Activated B cell treated with CpG ODN at 0.5 μM for 24 hours (primary cell): ENCODE measurements at regions of chr11 and their contacts with region 1.

Region 1: GRCh38 chr11:60913793-60914632 is at the start of gene TMEM109:
- DNase-seq: peak; percentile 80
- ATAC-seq: peak; percentile 54
- H3K4me3 Mint-ChIP-seq: peak within 1 kb of the TSS; percentile 98
- H3K27ac Mint-ChIP-seq: peak within 1 kb of the TSS; percentile 99
- H3K4me1 Mint-ChIP-seq: peaks cover 87% of the 10 kb centered on the region
- H3K27me3 Mint-ChIP-seq: no peaks in the 10 kb centered on the region
- CTCF ChIP-seq: no peak
- total RNA-seq, gene TMEM109: 117 and 121 TPM in 2 replicates

Region 2: DNA sequence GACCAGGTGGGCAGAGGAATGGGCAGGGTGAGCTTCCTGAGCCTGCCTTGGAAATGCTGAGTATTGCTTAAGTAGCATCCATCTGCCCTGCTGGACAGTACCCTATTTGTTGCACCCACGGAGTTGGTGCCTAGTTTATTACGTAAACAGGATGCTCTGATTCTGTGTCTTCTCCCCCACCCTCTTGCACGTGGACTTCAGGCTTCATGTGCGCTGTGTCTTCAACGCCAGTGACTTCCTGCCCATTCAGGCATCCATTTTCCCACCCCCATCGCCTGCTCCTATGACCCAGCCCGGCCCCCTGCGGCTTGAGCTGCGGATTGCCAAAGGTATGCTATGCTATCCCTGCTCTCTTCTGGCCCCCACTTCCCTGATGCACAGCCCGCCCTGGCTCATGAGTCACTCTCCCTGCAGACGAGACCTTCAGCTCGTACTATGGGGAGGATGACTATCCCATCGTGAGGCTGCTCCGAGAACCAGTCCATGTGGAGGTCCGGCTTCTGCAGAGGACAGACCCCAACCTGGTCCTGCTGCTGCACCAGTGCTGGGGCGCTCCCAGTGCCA is 41.0 kb before region 1 on chr11:
- CTCF ChIA-PET with region 1: no interaction called
- POLR2A ChIA-PET with region 1: no interaction called
- intact Hi-C with region 1: no loop called
- DNase-seq: no peak
- ATAC-seq: no peak
- H3K4me3 Mint-ChIP-seq: no peak overlapping the region
- H3K27ac Mint-ChIP-seq: no peak overlapping the region
- H3K4me1 Mint-ChIP-seq: no peaks in the 10 kb centered on the region
- H3K27me3 Mint-ChIP-seq: no peaks in the 10 kb centered on the region
- CTCF ChIP-seq: no peak

Region 3: GRCh38 chr11:60899046-60899936 is 14.7 kb before region 1 on chr11:
- CTCF ChIA-PET with region 1: interaction called, 16 read pairs
- POLR2A ChIA-PET with region 1: interaction called, 31 read pairs
- intact Hi-C with region 1: no loop called
- DNase-seq: no peak
- ATAC-seq: peak; percentile 90
- H3K4me3 Mint-ChIP-seq: no peak overlapping the region
- H3K27ac Mint-ChIP-seq: no peak overlapping the region
- H3K4me1 Mint-ChIP-seq: peaks cover 10% of the 10 kb centered on the region
- H3K27me3 Mint-ChIP-seq: no peaks in the 10 kb centered on the region
- CTCF ChIP-seq: peak; percentile 95

Region 4: GRCh38 chr11:60944490-60945294 is 30.7 kb after region 1 on chr11:
- CTCF ChIA-PET with region 1: interaction called, 11 read pairs
- POLR2A ChIA-PET with region 1: interaction called, 102 read pairs
- intact Hi-C with region 1: no loop called
- DNase-seq: no peak
- ATAC-seq: peak; percentile 31
- H3K4me3 Mint-ChIP-seq: no peak overlapping the region
- H3K27ac Mint-ChIP-seq: peak overlapping the region; percentile 27
- H3K4me1 Mint-ChIP-seq: peaks cover 66% of the 10 kb centered on the region
- H3K27me3 Mint-ChIP-seq: no peaks in the 10 kb centered on the region
- CTCF ChIP-seq: no peak

Region 5: GRCh38 chr11:60985991-60986915 is 72.2 kb after region 1 on chr11:
- CTCF ChIA-PET with region 1: no interaction called
- POLR2A ChIA-PET with region 1: interaction called, 13 read pairs
- intact Hi-C with region 1: no loop called
- DNase-seq: no peak
- ATAC-seq: peak; percentile 47
- H3K4me3 Mint-ChIP-seq: peak overlapping the region; percentile 24
- H3K27ac Mint-ChIP-seq: peak overlapping the region; percentile 79
- H3K4me1 Mint-ChIP-seq: peaks cover 53% of the 10 kb centered on the region
- H3K27me3 Mint-ChIP-seq: no peaks in the 10 kb centered on the region
- CTCF ChIP-seq: no peak

Region 6: GRCh38 chr11:61071208-61071681 is 157.2 kb after region 1 on chr11:
- CTCF ChIA-PET with region 1: interaction called, 3 read pairs
- POLR2A ChIA-PET with region 1: interaction called, 23 read pairs
- intact Hi-C with region 1: loop called (anchors 2 kb)
- DNase-seq: no peak
- ATAC-seq: peak; percentile 59
- H3K4me3 Mint-ChIP-seq: peak overlapping the region; percentile 70
- H3K27ac Mint-ChIP-seq: peak overlapping the region; percentile 95
- H3K4me1 Mint-ChIP-seq: peaks cover 81% of the 10 kb centered on the region
- H3K27me3 Mint-ChIP-seq: no peaks in the 10 kb centered on the region
- CTCF ChIP-seq: no peak

Region 7: GRCh38 chr11:61187505-61188130 is 273.6 kb after region 1 on chr11:
- CTCF ChIA-PET with region 1: interaction called, 4 read pairs
- POLR2A ChIA-PET with region 1: no interaction called
- intact Hi-C with region 1: loop called (anchors 1 kb)
- DNase-seq: peak; percentile 63
- ATAC-seq: peak; percentile 100
- H3K4me3 Mint-ChIP-seq: no peak overlapping the region
- H3K27ac Mint-ChIP-seq: no peak overlapping the region
- H3K4me1 Mint-ChIP-seq: peaks cover 4% of the 10 kb centered on the region
- H3K27me3 Mint-ChIP-seq: no peaks in the 10 kb centered on the region
- CTCF ChIP-seq: peak; percentile 98

Region 8: DNA sequence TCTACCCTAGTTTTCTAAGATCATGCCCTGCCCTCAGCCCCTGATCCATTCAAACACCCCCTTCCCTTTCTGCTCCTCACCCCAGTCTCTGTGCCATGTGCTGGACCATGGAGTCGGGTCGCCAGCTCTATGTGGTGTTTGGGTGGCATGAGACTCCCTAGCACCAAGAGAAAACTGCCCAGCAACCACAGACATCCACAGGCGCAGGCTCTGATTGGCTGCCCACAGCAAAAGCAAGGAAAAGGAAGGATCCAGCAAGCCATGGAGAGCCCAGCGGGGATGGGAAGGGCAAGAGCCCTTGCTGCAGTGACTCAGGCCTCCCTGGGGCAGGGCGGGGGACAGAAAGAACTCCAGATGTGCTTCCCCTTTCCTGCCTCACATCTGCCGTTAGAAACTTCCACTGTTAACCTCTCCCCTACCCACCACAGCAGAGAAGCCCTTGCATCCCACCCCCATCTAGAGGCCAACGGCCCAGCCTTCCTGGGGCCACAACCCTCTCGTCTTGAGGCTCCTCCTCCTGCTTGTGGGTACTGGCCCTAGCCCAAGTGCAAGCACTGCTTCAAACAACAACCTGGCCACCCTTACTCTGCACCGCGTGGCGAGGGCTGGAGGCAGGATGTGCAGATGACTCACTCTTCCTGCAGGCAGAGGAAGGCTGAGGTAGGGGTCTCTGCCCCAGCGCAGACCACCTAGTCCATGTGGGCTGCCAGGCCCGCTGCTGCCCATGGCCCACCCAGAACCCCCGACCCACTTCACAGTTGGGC is 1642.3 kb after region 1 on chr11:
- CTCF ChIA-PET with region 1: no interaction called
- POLR2A ChIA-PET with region 1: no interaction called
- intact Hi-C with region 1: loop called (anchors 5 kb)
- DNase-seq: peak; percentile 64
- ATAC-seq: peak; percentile 35
- H3K4me3 Mint-ChIP-seq: peak overlapping the region; percentile 81
- H3K27ac Mint-ChIP-seq: peak overlapping the region; percentile 99
- H3K4me1 Mint-ChIP-seq: peaks cover 87% of the 10 kb centered on the region
- H3K27me3 Mint-ChIP-seq: no peaks in the 10 kb centered on the region
- CTCF ChIP-seq: no peak